Heart left ventricle (tissue), 16 donors: ENCODE measurements at regions of chr3 and their contacts with region 1.

Region 1: GRCh38 chr3:14725013-14725412 is 50.1 kb downstream of the C3orf20 start:
- DNase-seq: peak in 3 of 5 donors; percentile 29 to 47 (median 37)
- ATAC-seq: peak; percentile 12 to 55 (median 37)
- H3K4me3 ChIP-seq: no peak overlapping the region
- H3K27ac ChIP-seq: peak overlapping the region; percentile 5 to 71 (median 48)
- H3K4me1 ChIP-seq: peaks cover 3 to 36% (median 25%) of the 10 kb centered on the region in 12 donors
- H3K27me3 ChIP-seq: no peaks in the 10 kb centered on the region
- CTCF ChIP-seq: no peak
- POLR2A ChIP-seq: no peak

Region 2: GRCh38 chr3:14836049-14836468 is 111.0 kb after region 1 on chr3:
- intact Hi-C with region 1: loop called in 1 of 10 experiments (anchors 5 kb)
- DNase-seq: peak; percentile 68 to 87 (median 83)
- ATAC-seq: peak; percentile 55 to 86 (median 84)
- H3K4me3 ChIP-seq: no peak overlapping the region
- H3K27ac ChIP-seq: peak overlapping the region in 9 of 12 donors; percentile 11 to 64 (median 42)
- H3K4me1 ChIP-seq: peaks cover 9 to 80% (median 53%) of the 10 kb centered on the region in 12 donors
- H3K27me3 ChIP-seq: no peaks in the 10 kb centered on the region
- CTCF ChIP-seq: no peak
- POLR2A ChIP-seq: no peak